CD4-positive, alpha-beta T cell (primary cell): ENCODE measurements at regions of chr18 and their contacts with region 1.

Region 1: DNA sequence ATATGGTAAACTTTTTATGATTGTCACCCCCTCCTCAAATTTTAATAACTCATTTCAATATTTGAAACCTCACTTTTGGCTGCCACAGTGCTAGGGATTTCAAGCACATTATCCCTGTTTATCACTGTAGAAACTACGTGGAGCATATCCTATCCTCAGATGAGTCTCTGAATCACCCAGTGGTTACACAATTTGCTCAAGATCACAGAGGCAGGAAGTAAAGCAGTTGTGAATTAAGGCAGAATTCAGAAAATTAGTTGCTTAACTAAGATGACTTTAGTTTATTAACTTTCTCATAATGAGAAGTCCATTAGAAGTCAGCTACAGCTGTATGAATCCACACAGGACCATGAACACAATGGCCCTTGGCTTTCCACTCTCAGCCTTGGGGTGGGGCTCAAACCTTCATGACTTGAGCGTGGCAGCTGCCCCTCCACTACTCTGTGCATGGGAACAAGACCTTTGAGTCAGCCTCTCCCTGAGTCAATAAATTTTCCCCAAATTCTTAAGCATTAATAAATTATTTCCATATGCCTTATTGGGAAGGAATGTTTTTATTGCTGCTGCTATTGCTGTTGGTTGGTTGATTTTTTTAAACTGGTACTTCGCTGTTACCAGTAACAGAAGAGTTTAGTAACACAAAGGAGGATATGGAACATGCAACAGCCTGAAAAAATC is 369.0 kb downstream of the CBLN2 start:
- DNase-seq: no peak
- ATAC-seq: no peak
- H3K4me3 ChIP-seq: no peak overlapping the region
- H3K4me3 Mint-ChIP-seq: no peak overlapping the region
- H3K27ac ChIP-seq: no peak overlapping the region
- H3K27ac Mint-ChIP-seq: no peak overlapping the region
- H3K4me1 ChIP-seq: no peaks in the 10 kb centered on the region
- H3K4me1 Mint-ChIP-seq: no peaks in the 10 kb centered on the region
- H3K27me3 ChIP-seq: no peaks in the 10 kb centered on the region
- H3K27me3 Mint-ChIP-seq: no peaks in the 10 kb centered on the region
- CTCF ChIP-seq: no peak

Region 2: GRCh38 chr18:72235422-72235821 is 60.3 kb after region 1 on chr18:
- CTCF ChIA-PET with region 1: no interaction called
- POLR2A ChIA-PET with region 1: no interaction called
- intact Hi-C with region 1: loop called in 1 of 2 experiments (anchors 10 kb)
- DNase-seq: no peak
- ATAC-seq: no peak
- H3K4me3 ChIP-seq: no peak overlapping the region
- H3K4me3 Mint-ChIP-seq: no peak overlapping the region
- H3K27ac ChIP-seq: no peak overlapping the region
- H3K27ac Mint-ChIP-seq: no peak overlapping the region
- H3K4me1 ChIP-seq: no peaks in the 10 kb centered on the region
- H3K4me1 Mint-ChIP-seq: no peaks in the 10 kb centered on the region
- H3K27me3 ChIP-seq: no peaks in the 10 kb centered on the region
- H3K27me3 Mint-ChIP-seq: no peaks in the 10 kb centered on the region
- CTCF ChIP-seq: no peak

Region 3: GRCh38 chr18:73986711-73987110 is 1811.6 kb after region 1 on chr18:
- CTCF ChIA-PET with region 1: no interaction called
- POLR2A ChIA-PET with region 1: no interaction called
- intact Hi-C with region 1: no loop called
- DNase-seq: no peak
- ATAC-seq: no peak
- H3K4me3 ChIP-seq: no peak overlapping the region
- H3K4me3 Mint-ChIP-seq: no peak overlapping the region
- H3K27ac ChIP-seq: no peak overlapping the region
- H3K27ac Mint-ChIP-seq: no peak overlapping the region
- H3K4me1 ChIP-seq: no peaks in the 10 kb centered on the region
- H3K4me1 Mint-ChIP-seq: no peaks in the 10 kb centered on the region
- H3K27me3 ChIP-seq: no peaks in the 10 kb centered on the region
- H3K27me3 Mint-ChIP-seq: no peaks in the 10 kb centered on the region
- CTCF ChIP-seq: no peak